Activated B cell treated with CpG ODN at 0.5 μM for 24 hours (primary cell): ENCODE measurements at regions of chr17 and their contacts with region 1.

Region 1: GRCh38 chr17:77465358-77466041 is 324.7 kb downstream of the SEC14L1 start:
- DNase-seq: peak; percentile 62
- ATAC-seq: peak; percentile 81
- H3K4me3 Mint-ChIP-seq: peak overlapping the region; percentile 75
- H3K27ac Mint-ChIP-seq: peak overlapping the region; percentile 93
- H3K4me1 Mint-ChIP-seq: peaks cover 94% of the 10 kb centered on the region
- H3K27me3 Mint-ChIP-seq: no peaks in the 10 kb centered on the region
- CTCF ChIP-seq: no peak

Region 2: DNA sequence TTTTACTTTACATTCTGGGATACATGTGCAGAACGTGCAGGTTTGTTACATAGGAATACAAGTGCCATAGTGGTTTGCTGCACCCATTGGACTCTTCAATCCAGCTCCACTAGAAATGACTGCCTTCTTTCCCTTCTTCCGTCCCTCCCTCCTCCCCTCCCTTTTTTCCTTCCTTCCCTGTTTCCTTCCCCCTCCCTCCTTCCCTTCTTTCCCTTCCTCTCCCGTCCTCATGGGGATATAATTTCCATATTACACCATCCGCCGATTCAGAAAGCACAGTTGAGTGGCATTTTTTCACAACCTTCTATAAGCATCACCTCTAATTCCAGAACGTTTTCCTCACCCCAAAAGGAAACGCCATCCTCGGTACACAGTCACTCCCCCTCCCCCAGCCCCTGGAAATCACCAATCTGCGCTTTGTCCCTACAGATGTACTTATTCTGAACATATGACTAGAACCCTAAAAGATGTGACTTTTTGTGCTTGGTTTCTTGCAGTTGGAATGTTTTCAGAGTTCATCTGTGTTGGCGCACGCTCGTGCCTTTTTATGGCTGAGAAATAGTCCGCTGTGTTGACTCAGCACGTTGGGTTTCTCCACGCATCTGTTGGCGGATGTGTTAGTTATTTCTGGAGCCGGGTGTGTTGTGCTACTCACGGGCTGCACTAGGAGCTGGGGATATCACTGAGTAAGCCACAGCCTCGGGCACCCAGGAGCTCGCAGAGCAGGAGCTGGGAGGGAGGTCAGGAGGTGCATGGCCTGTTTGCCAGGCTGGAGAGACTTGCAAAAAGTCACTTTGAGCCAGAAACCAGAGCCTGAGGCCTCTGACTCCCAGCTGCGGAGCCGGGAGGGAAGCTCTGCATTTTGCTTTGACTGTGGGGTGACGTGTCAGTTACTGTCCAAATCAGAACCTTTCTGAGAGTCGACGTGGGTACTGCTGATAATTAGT is 11.7 kb after region 1 on chr17:
- CTCF ChIA-PET with region 1: interaction called, 4 read pairs
- POLR2A ChIA-PET with region 1: interaction called, 150 read pairs
- intact Hi-C with region 1: loop called (anchors 1 kb)
- DNase-seq: no peak
- ATAC-seq: no peak
- H3K4me3 Mint-ChIP-seq: no peak overlapping the region
- H3K27ac Mint-ChIP-seq: peak overlapping the region; percentile 61
- H3K4me1 Mint-ChIP-seq: peaks cover 83% of the 10 kb centered on the region
- H3K27me3 Mint-ChIP-seq: no peaks in the 10 kb centered on the region
- CTCF ChIP-seq: no peak

Region 3: DNA sequence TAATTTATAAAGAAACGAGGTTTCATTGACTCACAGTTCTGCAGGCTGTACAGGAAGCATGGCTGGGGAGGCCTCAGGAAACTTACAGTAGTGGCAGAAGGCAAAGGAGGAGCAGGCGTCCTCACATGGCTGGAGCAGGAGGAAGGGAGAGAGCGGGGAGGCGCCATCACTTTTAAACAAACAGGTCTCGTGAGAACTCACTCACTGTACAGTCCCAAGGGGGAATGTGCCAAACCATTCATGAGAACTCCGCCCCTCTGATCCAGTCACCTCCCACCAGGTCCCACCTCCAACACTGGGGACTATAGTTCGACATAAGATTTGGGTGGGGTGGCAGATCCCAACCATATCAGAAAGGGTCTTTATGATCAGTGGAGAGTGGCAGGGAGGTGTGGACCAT is 100.7 kb after region 1 on chr17:
- CTCF ChIA-PET with region 1: no interaction called
- POLR2A ChIA-PET with region 1: no interaction called
- intact Hi-C with region 1: no loop called
- DNase-seq: no peak
- ATAC-seq: no peak
- H3K4me3 Mint-ChIP-seq: no peak overlapping the region
- H3K27ac Mint-ChIP-seq: no peak overlapping the region
- H3K4me1 Mint-ChIP-seq: peaks cover 2% of the 10 kb centered on the region
- H3K27me3 Mint-ChIP-seq: peaks cover 29% of the 10 kb centered on the region
- CTCF ChIP-seq: no peak